ENCODE measurements at regions of chr10 and their contacts with region 1.

Region 1: DNA sequence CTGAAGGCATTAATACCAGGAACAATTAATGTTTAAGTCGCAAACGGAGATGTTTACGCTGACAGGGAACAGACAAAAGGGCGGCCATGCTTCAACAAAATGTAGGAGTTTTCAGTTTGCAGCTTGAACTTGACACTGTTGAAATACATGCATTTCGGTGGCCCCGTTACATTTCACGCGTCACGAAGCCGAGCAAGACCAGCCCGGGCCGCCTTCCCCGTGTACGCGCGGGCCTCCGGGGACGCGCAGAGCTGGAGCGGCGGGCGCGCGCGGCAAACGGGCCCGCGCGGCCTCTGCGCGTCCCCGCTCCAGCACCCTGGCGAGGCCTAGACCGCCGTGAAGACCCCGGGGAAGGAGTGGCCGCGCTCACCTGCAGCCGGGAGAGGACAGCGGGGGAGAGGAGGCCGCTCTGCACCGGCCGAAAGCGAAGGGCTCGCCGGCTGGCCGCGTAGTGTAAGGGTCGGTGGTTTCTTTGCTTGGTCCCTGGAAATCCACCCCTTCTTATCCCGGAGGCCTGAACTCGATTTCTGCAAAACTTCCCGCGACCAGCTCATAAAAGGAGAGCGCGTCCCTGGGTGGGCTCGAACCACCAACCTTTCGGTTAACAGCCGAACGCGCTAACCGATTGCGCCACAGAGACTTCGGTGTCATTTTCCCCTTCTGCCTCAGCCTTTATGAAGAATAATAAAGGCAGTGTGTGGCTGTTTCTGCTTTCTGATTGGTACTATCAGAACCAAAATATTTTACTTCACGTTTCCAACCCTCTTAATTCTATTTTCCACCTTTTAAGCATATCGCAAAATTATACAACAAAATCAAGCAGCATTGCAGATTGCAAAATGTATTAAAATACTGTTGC is 11.4 kb upstream of the EBLN1 start:
- DNase-seq: peak; percentile 77 to 97 (median 90)
- ATAC-seq: peak; percentile 81 to 83
- H3K4me3 Mint-ChIP-seq: peak overlapping the region; percentile 89 to 98 (median 94)
- H3K27ac Mint-ChIP-seq: peak overlapping the region; percentile 91 to 100 (median 97)
- H3K4me1 Mint-ChIP-seq: peaks cover 10 to 22% (median 16%) of the 10 kb centered on the region in 4 donors
- H3K27me3 Mint-ChIP-seq: peaks cover 0 to 3% (median 3%) of the 10 kb centered on the region in 5 donors

Region 2: GRCh38 chr10:22003079-22003913 is 225.9 kb before region 1 on chr10 and contains the start of gene DNAJC1:
- POLR2A ChIA-PET with region 1: interaction called, 12 read pairs
- DNase-seq: peak; percentile 94 to 99 (median 98)
- ATAC-seq: peak; percentile 89 to 92
- H3K4me3 Mint-ChIP-seq: peak within 1 kb of the TSS; percentile 81 to 99 (median 94)
- H3K27ac Mint-ChIP-seq: peak within 1 kb of the TSS; percentile 49 to 97 (median 93)
- H3K4me1 Mint-ChIP-seq: peaks cover 12 to 41% (median 30%) of the 10 kb centered on the region in 4 donors
- H3K27me3 Mint-ChIP-seq: no peaks in the 10 kb centered on the region
- polyA plus RNA-seq, gene DNAJC1: 9.6 to 18.9 (median 10.8) TPM

Region 3: DNA sequence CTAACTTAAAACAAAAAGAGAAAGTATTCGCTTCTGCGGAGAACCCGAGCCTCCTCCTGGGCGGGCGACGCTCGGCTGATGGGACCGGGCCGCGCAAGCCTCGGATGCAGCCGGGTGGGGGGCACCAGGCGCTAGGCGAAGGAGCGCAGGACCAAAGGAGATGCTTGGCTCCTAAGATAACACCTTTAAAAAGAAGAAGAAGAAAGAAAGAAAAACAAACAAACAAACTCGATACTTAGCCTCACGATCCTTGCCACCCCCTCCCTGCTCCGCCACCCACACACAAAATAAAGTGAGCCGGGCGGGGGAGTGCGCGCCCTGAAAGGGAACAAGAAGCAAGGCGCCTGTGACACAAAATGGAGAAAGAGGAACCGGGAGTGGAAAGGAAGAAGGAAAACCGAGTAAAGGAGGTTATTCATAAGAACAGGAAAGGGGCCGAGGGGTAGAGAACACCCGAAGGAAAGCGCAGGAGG is 22.6 kb after region 1 on chr10:
- POLR2A ChIA-PET with region 1: interaction called, 28 read pairs
- DNase-seq: peak in 9 of 10 donors; percentile 22 to 79 (median 49)
- ATAC-seq: peak; percentile 62 to 66
- H3K4me3 Mint-ChIP-seq: peak overlapping the region; percentile 91 to 99 (median 97)
- H3K27ac Mint-ChIP-seq: peak overlapping the region; percentile 96 to 100 (median 98)
- H3K4me1 Mint-ChIP-seq: peaks cover 5 to 44% (median 14%) of the 10 kb centered on the region in 4 donors
- H3K27me3 Mint-ChIP-seq: peaks cover 5 to 30% (median 23%) of the 10 kb centered on the region in 5 donors

Region 4: DNA sequence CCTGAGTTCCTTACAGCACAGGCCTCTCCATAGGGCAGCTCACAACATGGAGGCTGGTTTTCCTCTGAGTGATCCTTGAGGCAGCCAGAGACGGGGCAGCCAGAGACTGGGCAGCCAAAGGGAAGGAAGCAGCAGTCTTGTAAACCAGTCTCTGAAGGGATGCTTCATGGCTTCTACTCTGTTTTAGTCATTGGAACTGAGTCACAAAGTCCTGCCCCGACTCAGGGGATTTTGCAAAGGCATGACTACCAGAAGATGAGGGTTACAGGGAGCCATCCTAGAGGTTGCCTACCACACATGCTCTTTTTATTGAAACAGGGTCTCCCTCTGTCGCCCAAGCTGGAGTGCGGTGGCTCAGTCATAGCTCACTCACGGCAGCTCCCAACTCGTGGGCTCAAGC is 42.6 kb after region 1 on chr10:
- POLR2A ChIA-PET with region 1: no interaction called
- DNase-seq: no peak
- ATAC-seq: no peak
- H3K4me3 Mint-ChIP-seq: no peak overlapping the region
- H3K27ac Mint-ChIP-seq: no peak overlapping the region
- H3K4me1 Mint-ChIP-seq: no peaks in the 10 kb centered on the region
- H3K27me3 Mint-ChIP-seq: peaks cover 4 to 12% (median 10%) of the 10 kb centered on the region in 5 donors

Region 5: DNA sequence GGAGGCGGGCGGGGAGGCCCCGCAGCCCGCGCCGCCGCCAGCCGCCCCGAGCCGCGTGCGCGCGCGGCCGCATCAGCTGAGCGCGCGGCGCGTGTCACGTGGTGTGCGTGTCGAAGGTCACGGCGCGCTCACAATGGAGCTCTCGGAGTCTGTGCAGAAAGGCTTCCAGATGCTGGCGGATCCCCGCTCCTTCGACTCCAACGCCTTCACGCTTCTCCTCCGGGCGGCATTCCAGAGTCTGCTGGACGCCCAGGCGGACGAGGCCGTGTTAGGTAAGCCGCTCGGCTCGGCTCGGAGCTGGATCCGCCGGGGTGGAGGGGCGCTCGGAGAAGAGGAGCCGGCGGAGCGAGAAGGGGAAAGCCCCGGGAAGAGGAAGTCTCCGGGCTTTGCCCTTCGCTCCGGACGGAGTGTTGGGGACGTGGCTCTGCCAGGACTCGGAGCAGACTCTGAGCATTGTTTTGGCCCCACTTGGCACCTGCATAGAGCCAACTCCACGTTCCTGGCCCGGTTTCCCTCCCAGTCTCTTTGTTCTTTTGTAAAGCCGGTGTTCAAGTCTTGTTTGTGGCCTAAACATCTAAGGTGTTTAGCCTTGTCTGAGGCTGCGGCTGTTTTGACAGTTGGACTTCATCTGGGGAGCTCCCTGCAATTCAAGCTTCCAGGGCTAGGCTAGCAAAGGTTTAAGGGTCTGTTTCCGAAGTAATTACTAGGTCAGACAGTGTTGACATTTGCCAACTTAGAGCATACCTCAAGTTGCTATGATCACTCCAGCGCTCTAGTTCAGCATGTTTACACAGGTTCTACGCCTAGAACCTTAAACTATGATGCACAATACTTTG is 87.3 kb after region 1 on chr10 and contains the start of gene COMMD3:
- POLR2A ChIA-PET with region 1: interaction called, 67 read pairs
- DNase-seq: peak; percentile 63 to 86 (median 75)
- ATAC-seq: peak; percentile 63 to 64
- H3K4me3 Mint-ChIP-seq: peak within 1 kb of the TSS; percentile 88 to 99 (median 93)
- H3K27ac Mint-ChIP-seq: peak within 1 kb of the TSS; percentile 93 to 98 (median 96)
- H3K4me1 Mint-ChIP-seq: peaks cover 6 to 48% (median 20%) of the 10 kb centered on the region in 4 donors
- H3K27me3 Mint-ChIP-seq: peaks cover 0 to 18% (median 11%) of the 10 kb centered on the region in 5 donors
- polyA plus RNA-seq, gene COMMD3: 38.5 to 57.8 (median 48.4) TPM

Region 6: GRCh38 chr10:22333167-22333974 is 104.2 kb after region 1 on chr10:
- POLR2A ChIA-PET with region 1: interaction called, 11 read pairs
- DNase-seq: peak in 3 of 10 donors; percentile 67 to 73 (median 70)
- ATAC-seq: peak; percentile 15 to 20
- H3K4me3 Mint-ChIP-seq: peak overlapping the region; percentile 68 to 84 (median 81)
- H3K27ac Mint-ChIP-seq: peak overlapping the region; percentile 68 to 92 (median 87)
- H3K4me1 Mint-ChIP-seq: peaks cover 8 to 37% (median 26%) of the 10 kb centered on the region in 4 donors
- H3K27me3 Mint-ChIP-seq: peaks cover 8 to 49% (median 28%) of the 10 kb centered on the region in 5 donors

Region 7: GRCh38 chr10:22479419-22479818 is 250.2 kb after region 1 on chr10:
- POLR2A ChIA-PET with region 1: no interaction called
- DNase-seq: no peak
- ATAC-seq: no peak
- H3K4me3 Mint-ChIP-seq: no peak overlapping the region
- H3K27ac Mint-ChIP-seq: no peak overlapping the region
- H3K4me1 Mint-ChIP-seq: peaks cover 5 to 24% (median 17%) of the 10 kb centered on the region in 4 donors
- H3K27me3 Mint-ChIP-seq: peaks cover 21 to 59% (median 31%) of the 10 kb centered on the region in 5 donors

Measured in naive thymus-derived CD8-positive, alpha-beta T cell (primary cell).